Right ventricle myocardium superior (tissue), 1 donor: ENCODE measurements at regions of chr22 and their contacts with region 1.

Region 1: DNA sequence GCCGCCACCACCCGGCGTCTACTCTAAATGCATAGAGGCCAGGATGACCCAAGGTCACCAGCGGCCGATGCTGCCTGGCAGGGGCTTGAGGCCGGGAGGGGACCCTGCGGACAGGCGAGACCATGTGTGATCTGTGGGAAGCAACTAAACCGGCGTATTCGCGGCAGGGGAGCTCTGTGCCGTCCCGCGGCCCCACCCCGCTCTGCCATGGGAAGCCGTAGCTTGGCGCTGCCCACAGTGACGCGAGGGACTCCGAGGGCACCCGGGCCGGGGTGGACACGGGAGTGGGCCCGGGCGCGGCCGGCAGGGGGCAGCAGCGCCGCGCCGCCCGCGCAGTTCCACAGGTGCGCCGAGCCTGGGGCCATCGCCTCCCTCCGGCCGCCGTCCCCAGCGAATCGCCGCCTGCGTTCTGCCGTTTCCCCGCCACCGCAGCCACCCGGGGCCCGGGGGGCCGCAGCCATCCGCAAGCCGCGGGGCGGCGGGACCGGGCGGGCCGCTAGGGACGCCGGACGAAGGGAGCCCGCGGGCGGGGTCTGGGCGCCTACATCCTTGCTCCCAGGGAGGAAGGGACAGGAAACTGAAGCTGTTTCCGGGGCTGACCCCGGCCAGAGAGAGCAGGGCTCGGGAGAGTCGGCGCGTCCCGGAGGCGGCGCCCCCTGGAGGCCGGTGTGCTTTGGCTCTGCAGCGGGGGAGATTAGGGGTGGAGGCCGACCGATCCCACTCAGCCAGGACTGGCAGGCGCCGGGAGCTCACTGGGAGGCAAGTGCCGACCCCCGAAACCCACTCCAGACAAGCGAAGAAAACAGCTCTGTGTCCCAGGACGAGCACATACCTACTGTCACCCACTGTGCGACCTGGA is 12.5 kb upstream of the HDHD5 start:
- DNase-seq: peak; percentile 95
- ATAC-seq: peak; percentile 93

Region 2: GRCh38 chr22:17359501-17359900 is 188.0 kb after region 1 on chr22:
- intact Hi-C with region 1: loop called (anchors 10 kb)
- DNase-seq: no peak
- ATAC-seq: no peak